Activated CD4-positive, alpha-beta T cell treated with anti-CD3 and anti-CD28 coated beads for 36 hours (primary cell): ENCODE measurements at regions of chr14 and their contacts with region 1.

Region 1: DNA sequence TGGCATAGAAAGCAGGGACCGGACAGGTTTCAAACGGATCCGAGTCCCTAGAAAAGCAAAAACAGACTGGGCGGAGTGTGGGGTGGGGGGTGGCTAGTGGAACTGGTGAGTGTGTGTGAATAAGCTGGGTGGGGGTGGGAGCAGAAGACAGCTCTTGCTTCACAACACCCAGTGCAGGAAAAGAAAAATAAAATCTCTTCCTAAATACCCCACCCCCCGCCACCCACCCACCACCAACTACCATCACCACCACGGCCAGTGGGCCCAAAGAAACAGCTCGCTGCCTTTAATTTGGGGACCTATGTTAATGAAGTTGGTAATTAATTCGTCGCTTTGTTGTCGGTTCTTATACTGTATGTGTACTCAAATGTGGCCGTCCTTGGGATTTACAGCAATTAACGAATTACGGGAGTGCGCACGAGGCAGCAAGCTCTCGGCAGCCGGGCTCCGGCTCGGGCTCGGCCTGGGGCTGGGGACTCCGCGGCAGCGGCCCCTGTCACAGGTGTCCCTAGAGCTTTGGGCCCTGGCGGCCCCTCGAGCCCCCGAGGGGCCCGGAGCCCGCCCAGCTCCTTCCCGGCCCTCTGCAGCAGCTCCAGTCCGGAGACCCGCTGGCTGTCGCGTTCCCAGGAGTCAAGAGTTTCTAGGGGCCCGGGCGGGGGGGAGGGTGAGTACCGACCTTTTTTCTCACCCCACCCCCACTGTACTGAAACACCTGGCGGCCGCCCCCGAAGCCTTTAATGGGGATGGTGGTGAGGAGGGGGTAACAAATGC is 1.5 kb upstream of the OTX2 start:
- DNase-seq: no peak
- ATAC-seq: no peak
- H3K4me3 Mint-ChIP-seq: no peak overlapping the region
- H3K27ac Mint-ChIP-seq: no peak overlapping the region
- H3K4me1 Mint-ChIP-seq: peaks cover 22% of the 10 kb centered on the region
- H3K27me3 Mint-ChIP-seq: peaks cover 62% of the 10 kb centered on the region

Region 2: GRCh38 chr14:56797569-56798446 is 14.0 kb before region 1 on chr14:
- CTCF ChIA-PET with region 1: interaction called, 4 read pairs
- POLR2A ChIA-PET with region 1: no interaction called
- intact Hi-C with region 1: loop called in 1 of 2 experiments (anchors 2 kb)
- DNase-seq: no peak
- ATAC-seq: no peak
- H3K4me3 Mint-ChIP-seq: no peak overlapping the region
- H3K27ac Mint-ChIP-seq: no peak overlapping the region
- H3K4me1 Mint-ChIP-seq: peaks cover 8% of the 10 kb centered on the region
- H3K27me3 Mint-ChIP-seq: peaks cover 69% of the 10 kb centered on the region